ENCODE measurements at regions of chr1 and their contacts with region 1.

Region 1: DNA sequence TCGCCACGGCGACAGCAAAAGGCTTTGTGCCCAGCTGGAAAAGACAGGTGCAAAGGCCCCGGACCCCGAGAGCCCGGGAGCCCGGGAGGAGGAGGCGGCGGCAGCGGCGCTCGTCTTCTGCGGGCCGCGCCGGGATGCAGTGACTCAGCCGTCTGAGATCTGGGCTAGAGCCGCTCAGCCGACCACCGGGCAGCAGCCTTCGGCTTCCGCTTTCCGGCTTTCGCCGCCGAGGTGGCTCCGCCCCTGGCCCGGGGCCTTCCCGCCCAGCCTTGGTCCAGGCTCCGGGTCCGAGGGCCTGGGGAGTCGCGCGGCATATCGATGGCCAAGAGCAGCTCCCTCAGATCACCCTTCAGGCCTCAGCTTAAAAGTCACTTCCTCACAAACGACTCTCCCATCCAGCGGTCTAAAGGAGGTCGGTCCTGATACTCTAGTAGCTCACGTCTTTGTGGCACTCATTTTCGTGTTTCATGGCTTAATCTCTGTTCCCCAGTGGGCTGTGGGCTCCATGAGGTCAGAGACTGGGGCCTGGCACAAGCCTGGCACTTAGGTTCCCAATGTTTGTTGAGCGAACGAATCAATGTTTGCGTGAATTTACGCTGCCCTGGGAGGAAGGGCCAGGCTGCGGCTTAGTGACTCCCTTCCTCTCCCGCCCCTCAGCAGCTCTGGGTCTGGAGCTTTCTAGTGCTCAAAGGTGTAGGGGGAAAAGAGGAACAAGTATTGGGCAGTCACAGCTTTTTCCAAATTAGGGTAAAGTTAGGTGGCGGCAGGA is at the start of gene PHTF1:
- DNase-seq: peak; percentile 73
- ATAC-seq: peak; percentile 84 to 94 (median 86)
- H3K4me3 ChIP-seq: peak within 1 kb of the TSS; percentile 98
- H3K4me3 Mint-ChIP-seq: peak within 1 kb of the TSS; percentile 97
- H3K27ac ChIP-seq: peak within 1 kb of the TSS; percentile 83
- H3K27ac Mint-ChIP-seq: peak within 1 kb of the TSS; percentile 92 to 98
- H3K4me1 ChIP-seq: peaks cover 8% of the 10 kb centered on the region
- H3K4me1 Mint-ChIP-seq: peaks cover 44% of the 10 kb centered on the region in 2 donors
- H3K27me3 ChIP-seq: no peaks in the 10 kb centered on the region
- H3K27me3 Mint-ChIP-seq: no peaks in the 10 kb centered on the region
- CTCF ChIP-seq: no peak
- total RNA-seq, gene PHTF1: 37.1 to 40.7 (median 40.6) TPM

Region 2: GRCh38 chr1:113072757-113073478 is 686.6 kb before region 1 on chr1 and contains the start of gene LRIG2:
- intact Hi-C with region 1: loop called (anchors 10 kb)
- DNase-seq: peak; percentile 95 to 98
- ATAC-seq: peak; percentile 95 to 99 (median 95)
- H3K4me3 ChIP-seq: peak within 1 kb of the TSS; percentile 72
- H3K4me3 Mint-ChIP-seq: peak within 1 kb of the TSS; percentile 97
- H3K27ac ChIP-seq: peak within 1 kb of the TSS; percentile 58
- H3K27ac Mint-ChIP-seq: peak within 1 kb of the TSS; percentile 95 to 99
- H3K4me1 ChIP-seq: peaks cover 10% of the 10 kb centered on the region
- H3K4me1 Mint-ChIP-seq: peaks cover 19 to 36% of the 10 kb centered on the region in 2 donors
- H3K27me3 ChIP-seq: no peaks in the 10 kb centered on the region
- H3K27me3 Mint-ChIP-seq: no peaks in the 10 kb centered on the region
- CTCF ChIP-seq: peak; percentile 88
- total RNA-seq, gene LRIG2: 20.2 to 28.5 (median 23.7) TPM

Region 3: DNA sequence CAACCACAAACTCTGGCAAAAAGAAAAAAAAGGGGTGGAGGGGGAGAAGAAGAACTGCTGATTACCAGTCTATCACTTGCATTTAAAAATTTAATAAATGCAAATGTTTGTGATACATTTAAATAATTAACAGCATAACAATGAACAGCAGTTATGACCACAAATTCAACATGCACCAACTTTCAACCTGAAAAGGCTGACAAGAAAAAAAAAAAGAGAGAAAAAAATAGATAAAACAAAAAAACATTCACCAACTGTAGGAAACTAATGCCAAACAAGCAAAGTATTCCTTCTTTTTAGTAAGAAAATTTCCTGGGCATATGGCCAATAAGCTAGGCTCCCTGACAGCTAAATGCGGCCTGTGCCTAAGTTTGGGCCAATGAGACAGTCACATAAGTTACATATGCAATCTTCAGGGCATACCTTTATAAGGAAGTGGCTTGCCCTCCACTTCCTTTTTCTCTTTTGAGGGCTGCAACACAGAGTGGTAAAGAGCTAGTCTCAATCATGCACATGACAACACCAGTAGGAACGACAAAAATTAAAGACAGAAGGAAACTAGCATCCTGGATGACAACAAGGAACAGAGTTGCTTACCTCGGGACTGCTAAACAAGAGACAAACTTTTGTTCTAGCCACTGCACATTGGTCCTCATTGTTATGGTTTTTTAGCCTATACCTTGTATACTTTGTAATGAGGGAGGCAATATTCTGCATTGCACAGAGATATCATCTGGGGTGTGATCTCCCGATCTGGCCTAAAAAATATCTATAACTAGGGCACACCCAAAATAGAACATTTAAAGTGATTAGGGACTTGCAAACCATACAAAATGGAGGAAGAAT is 24.0 kb after region 1 on chr1:
- intact Hi-C with region 1: loop called (anchors 2 kb)
- DNase-seq: peak; percentile 24 to 81
- ATAC-seq: peak; percentile 91 to 95 (median 95)
- H3K4me3 ChIP-seq: no peak overlapping the region
- H3K4me3 Mint-ChIP-seq: peak overlapping the region; percentile 83
- H3K27ac ChIP-seq: peak overlapping the region; percentile 80
- H3K27ac Mint-ChIP-seq: no peak overlapping the region
- H3K4me1 ChIP-seq: peaks cover 19% of the 10 kb centered on the region
- H3K4me1 Mint-ChIP-seq: peaks cover 30 to 32% of the 10 kb centered on the region in 2 donors
- H3K27me3 ChIP-seq: no peaks in the 10 kb centered on the region
- H3K27me3 Mint-ChIP-seq: no peaks in the 10 kb centered on the region
- CTCF ChIP-seq: no peak

Region 4: DNA sequence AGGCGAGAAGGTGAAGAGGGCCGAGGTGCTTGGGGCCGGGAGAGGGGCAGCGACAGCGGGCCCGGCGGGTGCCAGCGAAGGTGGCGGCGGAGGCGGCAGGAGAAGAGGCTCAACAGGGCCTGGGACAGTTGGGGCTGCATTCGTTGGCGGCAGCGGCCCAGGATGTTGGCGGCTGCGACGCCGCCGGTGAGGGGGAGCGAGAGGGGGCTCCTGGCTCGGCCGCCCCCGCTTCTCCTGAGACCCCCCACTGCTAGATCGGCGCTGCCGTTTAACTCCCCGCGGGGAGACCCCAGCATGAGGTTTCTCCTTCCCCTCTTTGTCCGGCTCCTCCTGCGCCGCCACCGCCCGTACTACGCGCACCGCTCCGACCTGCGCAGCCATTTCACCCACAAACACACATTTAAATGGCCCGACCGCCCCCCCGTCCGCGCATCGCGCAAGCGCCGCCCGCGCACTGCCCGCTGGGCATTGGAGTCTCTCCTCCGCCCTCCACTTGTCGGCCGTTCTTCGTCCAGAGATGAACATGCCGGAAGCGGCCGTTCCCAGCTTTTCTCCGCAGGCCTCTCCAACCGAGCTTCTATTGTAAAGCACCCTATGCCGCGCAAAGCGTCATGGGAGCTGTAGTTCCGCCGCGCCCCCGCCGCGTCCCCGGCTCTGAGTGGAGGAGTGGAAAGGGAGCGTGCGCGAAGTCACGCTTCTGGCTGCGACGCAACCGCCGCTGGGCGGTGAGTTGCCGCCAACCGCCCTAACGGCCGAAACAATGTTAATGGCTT is 52.6 kb after region 1 on chr1 and contains the start of gene RSBN1:
- intact Hi-C with region 1: loop called (anchors 1 kb)
- DNase-seq: peak; percentile 94 to 98
- ATAC-seq: peak; percentile 84 to 97 (median 88)
- H3K4me3 ChIP-seq: peak within 1 kb of the TSS; percentile 85
- H3K4me3 Mint-ChIP-seq: peak within 1 kb of the TSS; percentile 98
- H3K27ac ChIP-seq: peak within 1 kb of the TSS; percentile 97
- H3K27ac Mint-ChIP-seq: peak within 1 kb of the TSS; percentile 95
- H3K4me1 ChIP-seq: peaks cover 8% of the 10 kb centered on the region
- H3K4me1 Mint-ChIP-seq: peaks cover 37 to 38% of the 10 kb centered on the region in 2 donors
- H3K27me3 ChIP-seq: no peaks in the 10 kb centered on the region
- H3K27me3 Mint-ChIP-seq: no peaks in the 10 kb centered on the region
- CTCF ChIP-seq: no peak
- total RNA-seq, gene RSBN1: 30.1 to 37.9 (median 36.5) TPM

Measured in natural killer cell (primary cell).